Common myeloid progenitor, CD34-positive (primary cell): ENCODE measurements at regions of chr20 and their contacts with region 1.

Region 1: DNA sequence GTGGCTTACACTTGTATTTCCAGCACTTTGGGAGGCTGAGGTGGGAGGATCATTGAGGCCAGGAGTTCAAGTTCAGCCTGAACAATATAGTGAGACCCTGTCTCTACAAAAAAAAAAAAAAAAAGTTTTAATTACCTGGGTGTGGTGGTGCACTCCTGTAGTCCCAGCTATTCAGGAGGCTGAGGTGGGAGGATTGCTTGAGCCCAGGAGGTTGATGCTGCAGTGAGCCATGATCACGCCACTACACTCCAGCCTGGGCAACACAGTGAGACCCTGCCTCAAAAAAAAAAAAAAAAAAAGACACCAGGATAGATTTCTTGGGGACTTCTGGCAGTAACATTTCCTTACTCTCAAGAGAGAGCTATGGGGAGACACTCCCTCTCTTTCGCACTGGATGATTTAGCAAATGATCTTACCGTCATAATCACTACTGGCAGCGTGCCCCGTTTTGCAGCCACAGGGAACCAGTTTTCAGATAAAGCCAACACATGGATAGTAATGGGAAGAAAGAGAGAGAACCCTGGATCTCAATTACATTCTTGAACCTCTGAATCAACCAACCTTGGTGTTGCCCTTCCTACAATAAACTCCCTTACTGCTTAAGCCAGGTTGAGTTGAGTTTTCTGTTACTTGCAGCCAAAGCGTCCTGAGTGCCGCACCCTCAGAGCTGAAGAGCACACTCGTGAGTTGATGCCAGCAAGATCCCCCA is 18.1 kb upstream of the PTPN1 start:
- DNase-seq: no peak
- H3K4me3 ChIP-seq: no peak overlapping the region
- H3K27ac ChIP-seq: no peak overlapping the region
- H3K4me1 ChIP-seq: peaks cover 0 to 3% (median 0%) of the 10 kb centered on the region in 4 experiments
- H3K27me3 ChIP-seq: no peaks in the 10 kb centered on the region

Region 2: DNA sequence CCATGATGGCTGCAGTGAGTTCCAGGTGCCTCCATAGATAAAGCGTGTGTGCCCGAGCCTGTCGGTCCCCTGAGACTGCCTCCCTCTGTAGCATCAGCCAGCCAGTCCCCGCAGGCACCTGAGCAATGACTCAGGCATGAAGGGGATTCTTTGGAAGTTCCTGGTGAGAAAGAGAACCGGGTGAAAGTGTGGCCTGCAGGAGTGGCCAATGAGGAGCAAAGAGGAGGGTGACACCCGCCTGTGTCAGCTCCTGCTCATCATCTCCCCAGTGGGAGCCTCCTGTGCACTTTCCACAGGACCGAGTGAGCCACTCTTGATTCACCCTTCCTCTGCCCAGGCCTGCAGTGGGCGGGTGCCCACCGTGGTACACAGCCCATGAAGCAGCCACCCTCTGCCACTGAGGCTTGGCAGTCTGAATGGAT is 53.1 kb before region 1 on chr20:
- CTCF ChIA-PET with region 1: no interaction called
- POLR2A ChIA-PET with region 1: no interaction called
- DNase-seq: no peak
- H3K4me3 ChIP-seq: no peak overlapping the region
- H3K27ac ChIP-seq: no peak overlapping the region
- H3K4me1 ChIP-seq: peaks cover 0 to 11% (median 2%) of the 10 kb centered on the region in 4 experiments
- H3K27me3 ChIP-seq: no peaks in the 10 kb centered on the region

Region 3: DNA sequence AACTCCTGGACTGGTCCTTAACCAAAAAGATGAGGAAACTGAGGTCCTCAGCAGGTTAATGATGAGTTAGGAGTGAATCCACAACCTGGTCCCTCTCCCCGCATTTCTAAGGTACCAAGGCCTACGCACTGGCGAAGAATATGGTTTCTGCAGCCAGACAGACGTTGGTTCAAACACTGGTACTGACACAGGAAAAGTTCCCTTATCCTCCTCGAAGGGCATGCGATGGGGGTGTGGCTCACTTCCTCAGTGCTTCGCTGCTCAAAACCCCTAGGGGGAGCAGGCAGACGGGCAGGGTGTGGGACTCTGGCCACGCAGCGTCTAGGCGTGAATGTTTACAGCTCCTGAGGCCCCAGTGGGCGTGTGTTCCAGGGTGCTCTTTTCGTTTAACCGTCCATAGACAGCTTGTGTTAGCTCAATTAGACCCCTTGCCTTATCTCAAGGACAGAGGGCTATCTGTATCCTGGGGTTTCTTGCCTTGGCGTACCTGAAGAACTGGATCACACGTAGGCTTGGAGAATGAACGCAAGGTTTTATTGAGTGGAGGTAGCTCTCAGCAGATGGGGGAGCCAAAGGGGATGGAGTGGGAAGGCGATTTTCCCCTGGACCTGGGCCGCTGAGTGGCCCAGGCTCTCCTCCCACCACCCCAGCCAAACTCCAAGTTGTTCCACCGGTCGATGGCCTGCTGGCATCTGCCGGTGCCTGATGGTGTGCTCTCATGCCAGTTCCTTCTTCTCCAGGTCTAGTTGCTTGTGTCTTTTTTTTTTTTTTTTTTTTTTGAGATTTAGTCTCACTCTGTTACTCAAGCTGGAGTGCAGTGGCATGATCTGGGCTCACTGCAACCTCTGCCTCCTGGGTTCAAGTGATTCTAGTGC is 13.7 kb before region 1 on chr20:
- CTCF ChIA-PET with region 1: interaction called, 15 read pairs
- POLR2A ChIA-PET with region 1: no interaction called
- DNase-seq: peak; percentile 79 to 90 (median 89)
- H3K4me3 ChIP-seq: no peak overlapping the region
- H3K27ac ChIP-seq: no peak overlapping the region
- H3K4me1 ChIP-seq: peaks cover under 1 to 21% (median 20%) of the 10 kb centered on the region in 4 experiments
- H3K27me3 ChIP-seq: no peaks in the 10 kb centered on the region

Region 4: DNA sequence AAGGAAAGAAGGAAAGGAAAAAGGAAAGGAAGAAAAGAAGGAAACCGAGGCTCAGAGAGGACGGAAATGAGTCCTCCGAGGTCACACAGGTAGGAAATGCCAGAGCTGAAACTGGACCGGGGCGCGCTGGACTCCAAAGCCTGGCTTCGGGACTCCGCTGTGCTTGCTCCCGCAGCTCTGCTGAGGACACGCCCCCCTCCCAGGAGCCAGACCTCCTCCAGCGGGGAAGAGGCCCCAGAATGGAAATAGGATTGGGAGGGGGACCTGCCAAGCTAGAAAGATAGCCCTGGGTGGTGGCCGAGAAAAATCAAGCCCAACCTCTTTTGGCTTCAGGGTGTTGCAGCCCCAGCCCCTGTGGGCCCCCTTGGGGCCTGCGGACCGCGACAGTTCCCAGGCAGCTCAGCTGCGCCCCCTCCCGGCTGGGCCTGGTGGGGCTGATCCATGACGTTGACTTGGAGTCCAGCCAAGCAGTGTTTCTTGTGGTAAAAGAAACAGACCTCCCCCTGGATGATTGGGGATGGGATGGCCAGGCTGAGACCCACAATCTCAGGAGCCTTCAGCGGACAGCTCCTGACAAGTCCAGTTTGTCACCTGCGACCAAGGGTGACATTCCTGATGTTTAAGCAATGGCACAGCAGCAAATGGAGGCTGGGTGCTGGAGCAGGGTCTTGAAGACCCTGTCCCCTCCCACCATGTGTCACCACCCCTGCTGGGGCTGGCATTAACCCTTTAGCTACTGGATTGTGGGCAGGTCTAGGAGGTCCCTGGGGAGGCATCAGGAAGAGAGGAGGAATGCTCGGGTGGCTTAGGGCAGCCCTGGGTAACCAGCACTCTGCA is 143.8 kb after region 1 on chr20:
- CTCF ChIA-PET with region 1: no interaction called
- POLR2A ChIA-PET with region 1: no interaction called
- DNase-seq: peak; percentile 75 to 89 (median 85)
- H3K4me3 ChIP-seq: no peak overlapping the region
- H3K27ac ChIP-seq: no peak overlapping the region
- H3K4me1 ChIP-seq: peaks cover 0 to 8% (median 3%) of the 10 kb centered on the region in 4 experiments
- H3K27me3 ChIP-seq: no peaks in the 10 kb centered on the region

Region 5: DNA sequence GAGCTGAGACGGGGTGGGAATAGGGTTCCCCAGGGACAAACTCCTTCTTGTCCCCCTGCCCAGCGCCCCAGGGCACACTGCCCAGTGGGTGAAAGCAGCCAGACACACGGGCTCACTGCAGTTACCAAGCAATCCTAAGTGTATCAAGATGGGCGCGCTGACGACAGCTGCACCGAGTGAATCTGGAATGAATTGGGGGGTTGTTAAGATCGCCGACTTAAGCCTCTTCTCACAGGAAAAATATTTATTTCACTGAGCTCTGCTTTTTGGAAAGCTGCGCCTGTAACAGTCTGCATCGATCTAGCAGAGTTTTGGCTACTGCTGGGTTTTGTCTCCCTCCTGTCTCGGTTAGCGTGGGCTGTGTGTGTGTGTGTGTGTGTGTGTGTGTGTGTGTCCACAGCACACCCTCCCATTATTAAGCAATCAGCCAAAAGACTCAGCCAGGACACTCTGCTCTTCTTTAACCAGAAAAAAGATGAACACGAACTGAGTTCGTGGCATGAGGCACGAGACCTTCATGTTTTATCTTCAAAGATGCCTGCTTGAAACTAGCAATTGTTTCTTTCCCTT is 163.3 kb after region 1 on chr20:
- CTCF ChIA-PET with region 1: no interaction called
- POLR2A ChIA-PET with region 1: no interaction called
- DNase-seq: no peak
- H3K4me3 ChIP-seq: no peak overlapping the region
- H3K27ac ChIP-seq: no peak overlapping the region
- H3K4me1 ChIP-seq: no peaks in the 10 kb centered on the region
- H3K27me3 ChIP-seq: no peaks in the 10 kb centered on the region